Left cardiac atrium (tissue), 4 donors: ENCODE measurements at regions of chr12 and their contacts with region 1.

Region 1: GRCh38 chr12:13094347-13094746 is 9.1 kb downstream of the GSG1 start:
- DNase-seq: no peak
- ATAC-seq: no peak

Region 2: GRCh38 chr12:12964255-12964654 is 130.1 kb before region 1 on chr12:
- intact Hi-C with region 1: no loop called
- DNase-seq: no peak
- ATAC-seq: no peak

Region 3: GRCh38 chr12:12999959-13000615 is 94.3 kb before region 1 on chr12 and contains the start of gene HEBP1:
- intact Hi-C with region 1: loop called in 1 of 2 experiments (anchors 10 kb)
- DNase-seq: peak; percentile 96
- ATAC-seq: peak; percentile 95 to 97
- total RNA-seq, gene HEBP1: 57.5 to 65.1 TPM

Region 4: GRCh38 chr12:13165617-13166041 is 71.3 kb after region 1 on chr12:
- intact Hi-C with region 1: no loop called
- DNase-seq: peak; percentile 77
- ATAC-seq: peak; percentile 90 to 94

Region 5: DNA sequence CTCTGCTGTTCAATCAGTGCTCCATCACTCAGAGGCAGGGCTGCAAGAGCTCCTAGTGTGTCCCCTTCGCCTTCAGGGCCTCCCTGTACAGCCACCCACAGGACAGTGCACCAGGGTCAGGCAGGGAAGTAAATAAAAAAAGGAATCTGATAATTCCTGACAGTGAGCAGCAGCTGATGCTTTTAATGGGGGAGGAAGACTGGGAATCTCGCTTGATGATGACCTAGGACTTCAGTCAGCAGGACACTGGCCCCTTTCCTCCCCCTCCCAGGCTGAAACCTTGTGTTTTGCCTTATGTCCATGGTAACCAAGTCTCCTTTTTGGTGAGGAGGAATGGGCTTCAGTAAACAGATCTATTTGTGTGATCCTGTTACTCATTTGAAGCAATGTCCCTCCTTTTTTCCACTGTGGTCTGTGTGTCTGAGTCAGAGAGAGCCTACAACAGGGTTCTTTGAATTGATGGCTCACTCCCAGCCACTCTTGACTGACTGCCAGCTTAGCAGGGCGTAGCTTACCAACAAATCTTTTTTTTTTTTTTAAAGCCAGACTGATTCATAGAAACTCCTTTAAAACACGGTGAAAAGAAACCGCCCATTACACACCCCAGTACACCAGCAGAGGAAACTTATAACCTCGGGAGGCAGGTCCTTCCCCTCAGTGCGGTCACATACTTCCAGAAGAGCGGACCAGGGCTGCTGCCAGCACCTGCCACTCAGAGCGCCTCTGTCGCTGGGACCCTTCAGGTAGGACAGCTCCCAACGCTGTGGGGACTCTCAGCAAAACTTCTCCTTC is 102.0 kb after region 1 on chr12 and contains the start of gene EMP1:
- intact Hi-C with region 1: loop called (anchors 2 to 5 kb)
- DNase-seq: peak; percentile 96
- ATAC-seq: peak; percentile 83 to 88
- total RNA-seq, gene EMP1: 304 to 477 TPM

Region 6: GRCh38 chr12:13203034-13203922 is 108.9 kb after region 1 on chr12:
- intact Hi-C with region 1: loop called in 1 of 2 experiments (anchors 5 kb)
- DNase-seq: peak; percentile 63
- ATAC-seq: peak; percentile 45 to 49